ENCODE measurements at regions of chr20 and their contacts with region 1.

Region 1: GRCh38 chr20:45798935-45799642 is 7.3 kb downstream of the DNTTIP1 start:
- DNase-seq: peak; percentile 83
- ATAC-seq: peak; percentile 97
- H3K4me3 Mint-ChIP-seq: no peak overlapping the region
- H3K27ac Mint-ChIP-seq: peak overlapping the region; percentile 65
- H3K4me1 Mint-ChIP-seq: peaks cover 23% of the 10 kb centered on the region
- H3K27me3 Mint-ChIP-seq: no peaks in the 10 kb centered on the region

Region 2: GRCh38 chr20:45629496-45630100 is 169.5 kb before region 1 on chr20 and contains the start of gene WFDC10A:
- CTCF ChIA-PET with region 1: no interaction called
- DNase-seq: no peak
- ATAC-seq: peak; percentile 67
- H3K4me3 Mint-ChIP-seq: no peak within 1 kb of the TSS
- H3K27ac Mint-ChIP-seq: no peak within 1 kb of the TSS
- H3K4me1 Mint-ChIP-seq: no peaks in the 10 kb centered on the region
- H3K27me3 Mint-ChIP-seq: peaks cover 22% of the 10 kb centered on the region
- total RNA-seq, gene WFDC10A: not detected

Region 3: GRCh38 chr20:45735552-45735951 is 63.5 kb before region 1 on chr20:
- CTCF ChIA-PET with region 1: no interaction called
- DNase-seq: no peak
- ATAC-seq: no peak
- H3K4me3 Mint-ChIP-seq: no peak overlapping the region
- H3K27ac Mint-ChIP-seq: no peak overlapping the region
- H3K4me1 Mint-ChIP-seq: no peaks in the 10 kb centered on the region
- H3K27me3 Mint-ChIP-seq: peaks cover 35% of the 10 kb centered on the region

Region 4: GRCh38 chr20:45812157-45813020 is 13.3 kb after region 1 on chr20 and contains the start of gene UBE2C:
- CTCF ChIA-PET with region 1: interaction called, 30 read pairs
- DNase-seq: peak; percentile 99
- ATAC-seq: peak; percentile 99
- H3K4me3 Mint-ChIP-seq: peak within 1 kb of the TSS; percentile 99
- H3K27ac Mint-ChIP-seq: peak within 1 kb of the TSS; percentile 88
- H3K4me1 Mint-ChIP-seq: peaks cover 30% of the 10 kb centered on the region
- H3K27me3 Mint-ChIP-seq: no peaks in the 10 kb centered on the region
- total RNA-seq, gene UBE2C: 206 to 219 TPM

Region 5: DNA sequence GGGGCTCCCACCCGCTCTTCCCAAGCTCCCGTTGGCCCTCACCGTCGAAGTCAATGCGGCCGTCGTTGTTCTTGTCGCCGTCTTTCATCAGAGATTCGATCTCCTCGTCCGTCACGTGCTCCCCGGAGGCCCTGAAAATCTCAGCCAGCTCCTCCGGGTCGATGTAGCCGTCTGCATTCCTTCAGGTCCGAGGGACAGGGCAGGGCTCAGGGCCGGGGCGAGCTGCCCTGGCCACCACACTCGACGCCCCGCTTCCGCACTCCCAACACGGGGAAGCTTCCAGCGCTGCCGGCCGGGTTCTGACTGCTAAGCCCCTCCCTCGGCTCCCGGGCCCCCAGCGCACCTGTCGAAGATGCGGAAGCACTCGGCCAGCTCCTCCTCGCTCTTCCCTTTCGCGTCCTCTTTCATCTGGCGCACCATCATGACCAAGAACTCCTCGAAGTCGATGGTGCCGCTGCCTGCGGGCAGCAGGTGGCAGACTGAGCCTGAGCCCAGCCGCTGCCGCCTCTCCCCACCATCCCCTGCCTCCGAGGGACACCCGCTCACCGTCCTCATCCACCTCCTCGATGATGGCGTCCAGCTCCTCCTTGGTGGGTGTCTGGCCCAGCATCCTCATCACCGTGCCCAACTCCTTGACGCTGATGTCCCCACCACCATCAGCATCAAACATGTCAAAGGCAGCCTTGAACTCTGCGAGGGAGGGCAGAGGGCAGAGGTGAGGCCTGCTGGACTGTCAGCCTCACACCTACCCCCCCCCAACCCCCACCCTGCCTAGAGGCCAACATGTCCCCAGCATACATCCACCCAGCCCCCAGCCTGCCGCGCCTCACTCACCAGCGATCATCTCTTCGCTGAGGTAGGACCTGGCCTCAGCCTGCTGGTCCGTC is 25.1 kb after region 1 on chr20:
- CTCF ChIA-PET with region 1: interaction called, 10 read pairs
- DNase-seq: peak; percentile 65
- ATAC-seq: peak; percentile 81
- H3K4me3 Mint-ChIP-seq: peak overlapping the region; percentile 59
- H3K27ac Mint-ChIP-seq: no peak overlapping the region
- H3K4me1 Mint-ChIP-seq: peaks cover 13% of the 10 kb centered on the region
- H3K27me3 Mint-ChIP-seq: peaks cover 31% of the 10 kb centered on the region

Region 6: DNA sequence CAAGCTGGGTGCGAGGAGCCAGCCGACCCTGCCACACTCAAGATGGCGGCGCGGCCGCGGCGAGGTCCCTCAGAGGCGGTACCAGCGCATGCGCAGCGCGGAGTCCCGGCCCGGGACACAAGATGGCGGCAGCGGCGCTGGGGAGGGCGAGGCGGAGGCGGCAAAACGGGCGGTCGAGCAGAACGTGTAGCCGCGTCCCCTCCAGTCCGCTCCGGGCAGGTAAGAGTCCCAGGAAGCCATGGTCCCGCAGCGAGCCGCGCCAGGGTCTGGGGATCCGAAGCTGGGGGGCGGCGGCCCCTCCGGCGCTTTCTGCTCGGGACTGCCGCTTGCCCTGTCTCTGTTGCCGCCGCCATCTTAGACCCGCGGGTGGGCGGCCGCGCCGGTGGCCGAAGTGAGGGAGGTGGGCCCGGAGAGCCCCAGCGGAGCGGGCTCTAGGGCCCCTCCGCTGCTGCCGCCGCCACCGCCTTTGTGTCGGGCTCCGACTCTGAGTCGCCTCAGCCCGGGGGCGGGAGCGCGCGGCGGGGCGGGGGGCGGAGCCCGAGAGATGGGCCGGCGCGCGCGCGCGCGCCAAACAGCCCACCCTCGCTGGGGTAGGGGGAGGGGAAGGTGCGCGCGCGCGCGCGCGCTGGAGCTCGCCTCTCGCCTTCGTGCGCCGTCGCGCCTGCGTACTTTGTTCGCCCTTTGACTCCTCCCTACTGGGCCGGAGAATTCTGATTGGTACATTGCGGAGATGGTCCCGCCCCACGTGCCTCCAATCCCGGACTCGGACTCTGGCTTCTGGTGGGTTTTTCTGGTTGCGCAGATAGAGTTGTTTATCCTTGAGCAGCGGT is 135.7 kb after region 1 on chr20 and contains the start of gene PCIF1:
- CTCF ChIA-PET with region 1: interaction called, 16 read pairs
- DNase-seq: peak; percentile 98
- ATAC-seq: peak; percentile 86
- H3K4me3 Mint-ChIP-seq: peak within 1 kb of the TSS; percentile 96
- H3K27ac Mint-ChIP-seq: peak within 1 kb of the TSS; percentile 98
- H3K4me1 Mint-ChIP-seq: peaks cover 35% of the 10 kb centered on the region
- H3K27me3 Mint-ChIP-seq: no peaks in the 10 kb centered on the region
- total RNA-seq, gene PCIF1: 41.6 to 52.3 TPM

Region 7: GRCh38 chr20:45963059-45964005 is 164.2 kb after region 1 on chr20:
- CTCF ChIA-PET with region 1: interaction called, 35 read pairs
- DNase-seq: no peak
- ATAC-seq: no peak
- H3K4me3 Mint-ChIP-seq: no peak overlapping the region
- H3K27ac Mint-ChIP-seq: no peak overlapping the region
- H3K4me1 Mint-ChIP-seq: peaks cover 7% of the 10 kb centered on the region
- H3K27me3 Mint-ChIP-seq: no peaks in the 10 kb centered on the region

Region 8: GRCh38 chr20:45987108-45987780 is 188.2 kb after region 1 on chr20:
- CTCF ChIA-PET with region 1: interaction called, 12 read pairs
- DNase-seq: peak; percentile 84
- ATAC-seq: peak; percentile 97
- H3K4me3 Mint-ChIP-seq: no peak overlapping the region
- H3K27ac Mint-ChIP-seq: no peak overlapping the region
- H3K4me1 Mint-ChIP-seq: peaks cover 15% of the 10 kb centered on the region
- H3K27me3 Mint-ChIP-seq: peaks cover 25% of the 10 kb centered on the region